Head of caudate nucleus (tissue), 42 donors: ENCODE measurements at regions of chr6 and their contacts with region 1.

Region 1: DNA sequence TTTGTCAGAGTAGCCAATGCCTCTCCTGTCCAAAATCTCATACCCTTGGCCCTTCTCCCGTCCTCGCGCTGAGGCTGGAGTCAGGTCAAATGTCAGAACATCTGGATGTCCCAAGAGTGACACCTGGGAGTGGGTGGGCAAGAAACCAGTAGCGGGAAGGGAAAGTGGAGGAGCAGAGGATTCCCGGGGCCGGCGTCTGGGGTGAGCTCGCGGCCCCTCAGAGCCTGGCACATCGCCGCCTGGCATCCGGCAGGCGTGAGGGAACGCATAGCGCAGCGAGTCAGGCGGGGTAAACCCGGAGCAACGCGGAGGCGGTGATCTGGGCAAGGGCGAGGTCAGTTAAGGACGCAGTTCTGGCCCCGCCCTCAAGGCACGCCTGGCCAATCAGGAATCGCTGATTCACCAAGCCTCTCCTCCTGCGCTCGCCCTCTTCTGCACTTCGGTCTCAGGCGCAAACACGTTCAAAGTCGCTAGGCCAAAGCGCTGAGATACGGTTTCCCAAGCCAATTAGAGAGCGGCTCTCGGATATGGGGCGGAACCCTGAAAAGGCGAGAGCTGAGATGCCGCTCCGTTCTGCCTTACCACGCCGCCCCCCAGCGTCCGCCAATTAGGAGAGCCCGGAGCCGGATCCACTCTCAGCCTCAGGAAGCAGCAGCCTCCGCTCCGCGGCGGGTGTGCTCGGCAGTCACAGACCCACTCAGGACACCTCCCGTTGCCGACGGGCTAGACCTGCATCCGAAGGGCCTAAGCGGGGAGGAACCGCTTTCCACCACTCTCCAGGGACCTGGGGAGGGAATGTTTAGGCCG is 22.5 kb downstream of the VPS52 start:
- DNase-seq: peak; percentile 90 to 99 (median 98)

Region 2: GRCh38 chr6:32445321-32445854 is 803.7 kb before region 1 on chr6:
- intact Hi-C with region 1: no loop called
- DNase-seq: no peak

Region 3: GRCh38 chr6:33014841-33015634 is 234.1 kb before region 1 on chr6:
- intact Hi-C with region 1: loop called (anchors 10 kb)
- DNase-seq: peak in 22 of 42 donors; percentile 5 to 84 (median 60)

Region 4: DNA sequence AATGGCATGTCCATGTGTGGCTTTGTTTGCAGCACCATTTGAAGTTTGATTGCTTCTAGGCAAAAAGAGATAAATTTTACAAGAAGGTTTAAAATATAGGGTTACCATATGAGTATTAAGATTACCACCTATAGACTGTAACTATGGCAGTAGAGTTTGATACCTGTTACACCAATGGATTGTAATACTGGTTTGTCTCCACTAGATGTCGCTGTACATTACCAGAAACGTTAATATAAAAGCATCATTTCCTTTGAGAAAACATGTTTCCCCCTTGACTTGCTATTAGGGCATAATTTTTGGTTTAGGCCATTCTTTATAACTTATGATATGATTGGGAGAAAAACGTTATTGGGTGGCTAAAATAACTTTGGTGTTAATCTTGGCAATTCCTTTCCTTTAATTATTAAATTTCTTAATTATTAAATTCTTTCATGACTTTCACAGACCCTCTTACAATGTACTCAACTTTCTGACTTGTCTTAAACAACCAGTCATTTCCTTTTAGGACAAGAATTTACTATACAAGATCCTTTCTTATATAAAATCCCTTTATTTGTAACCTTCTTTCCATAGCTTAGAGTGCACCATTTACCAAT is 130.5 kb before region 1 on chr6:
- intact Hi-C with region 1: loop called (anchors 5 kb)
- DNase-seq: peak in 4 of 42 donors; percentile 18 to 51 (median 26)

Region 5: DNA sequence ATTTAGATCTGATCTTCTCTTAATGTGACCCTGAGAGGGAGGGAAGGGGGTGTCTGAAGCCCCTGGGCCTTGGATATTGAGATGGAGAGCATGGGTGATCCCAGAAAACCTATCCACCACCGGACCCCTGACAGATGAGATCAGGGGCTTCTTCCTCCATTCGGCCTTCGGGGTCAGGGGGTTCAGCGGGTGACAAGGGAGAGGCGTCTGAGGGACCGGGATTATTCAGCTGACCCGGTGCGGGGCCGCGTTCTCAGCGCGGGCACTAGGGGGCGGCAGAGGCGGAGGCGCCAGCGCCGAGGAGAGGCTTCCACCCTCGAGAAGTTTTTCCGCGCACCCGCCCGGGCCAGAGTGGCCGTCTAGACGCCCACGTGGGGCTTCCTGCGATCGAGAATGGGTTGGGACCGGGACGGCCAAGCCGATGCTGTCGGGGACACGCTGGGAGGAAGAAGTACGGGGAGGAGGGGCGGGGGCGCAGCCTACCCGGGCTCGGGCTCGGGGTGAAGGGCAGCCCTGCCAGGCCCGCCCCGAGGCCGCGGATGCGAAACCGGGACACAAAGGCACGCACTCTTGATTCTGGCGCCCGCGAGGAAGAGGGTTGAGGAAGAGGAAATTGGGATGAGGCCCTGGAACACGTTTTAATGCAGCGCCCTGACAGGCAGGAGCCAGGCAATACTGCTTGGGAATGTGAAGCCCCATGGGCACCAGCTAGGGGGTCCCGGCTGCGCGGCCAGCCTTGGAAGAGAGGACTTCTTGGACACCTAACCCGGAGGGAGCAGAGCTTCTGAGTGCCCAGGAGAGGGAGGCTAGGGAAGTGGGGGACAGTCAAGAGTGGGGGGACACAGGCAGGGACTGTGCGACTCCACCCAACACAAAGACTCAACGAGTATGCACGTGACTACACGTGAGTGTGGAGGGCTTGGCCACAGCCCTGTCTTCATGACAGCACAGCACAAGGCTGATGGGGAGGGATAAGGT is 87.5 kb before region 1 on chr6:
- intact Hi-C with region 1: loop called (anchors 5 kb)
- DNase-seq: peak; percentile 50 to 93 (median 84)

Region 6: DNA sequence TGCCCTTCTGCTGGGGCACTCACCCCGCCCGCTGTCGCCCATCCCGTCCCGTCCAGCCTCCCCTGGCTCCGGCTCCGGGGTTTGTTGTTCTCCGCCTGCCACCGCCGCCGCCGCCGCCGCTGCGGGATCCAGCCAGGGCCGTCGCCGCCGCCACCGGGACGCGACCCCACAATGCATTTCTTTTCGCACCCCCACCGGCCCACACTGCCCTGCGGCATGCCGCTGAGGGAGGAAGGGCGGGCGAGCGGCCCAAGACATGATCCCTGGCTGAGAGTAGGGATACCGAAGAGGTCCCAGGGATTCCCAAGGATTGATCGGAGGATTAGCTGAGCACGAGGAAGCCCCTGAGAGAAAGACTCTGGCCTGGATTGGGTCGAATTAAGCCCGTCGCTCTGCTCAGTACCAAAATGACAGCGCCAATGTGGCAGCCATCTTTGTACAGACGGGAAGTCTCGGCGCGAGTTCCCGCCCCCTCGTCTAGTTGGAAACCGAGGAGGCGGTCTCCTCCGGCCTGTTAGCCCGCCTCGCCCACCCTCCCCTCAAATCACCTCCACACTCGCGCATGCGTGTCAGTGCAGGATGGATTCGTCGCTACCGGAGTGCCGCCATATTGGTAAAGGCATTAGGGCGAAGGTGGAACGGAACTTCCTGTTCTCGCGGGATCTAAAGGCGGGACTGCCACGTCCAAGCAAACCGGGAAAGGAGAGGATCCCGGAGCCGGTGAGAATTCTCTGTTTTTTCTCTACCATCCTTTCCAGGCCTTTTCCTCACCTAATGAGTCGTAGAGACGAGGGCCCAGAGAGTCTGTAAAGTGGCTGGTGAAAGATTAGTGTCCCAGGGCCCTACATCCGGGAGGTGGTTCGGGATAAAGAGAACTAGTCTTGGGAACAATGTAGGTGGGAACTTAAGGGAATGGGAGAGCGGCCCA is 48.6 kb before region 1 on chr6 and contains the starts of genes RXRB and SLC39A7:
- intact Hi-C with region 1: loop called (anchors 5 kb)
- DNase-seq: peak; percentile 95 to 99 (median 98)

Region 7: DNA sequence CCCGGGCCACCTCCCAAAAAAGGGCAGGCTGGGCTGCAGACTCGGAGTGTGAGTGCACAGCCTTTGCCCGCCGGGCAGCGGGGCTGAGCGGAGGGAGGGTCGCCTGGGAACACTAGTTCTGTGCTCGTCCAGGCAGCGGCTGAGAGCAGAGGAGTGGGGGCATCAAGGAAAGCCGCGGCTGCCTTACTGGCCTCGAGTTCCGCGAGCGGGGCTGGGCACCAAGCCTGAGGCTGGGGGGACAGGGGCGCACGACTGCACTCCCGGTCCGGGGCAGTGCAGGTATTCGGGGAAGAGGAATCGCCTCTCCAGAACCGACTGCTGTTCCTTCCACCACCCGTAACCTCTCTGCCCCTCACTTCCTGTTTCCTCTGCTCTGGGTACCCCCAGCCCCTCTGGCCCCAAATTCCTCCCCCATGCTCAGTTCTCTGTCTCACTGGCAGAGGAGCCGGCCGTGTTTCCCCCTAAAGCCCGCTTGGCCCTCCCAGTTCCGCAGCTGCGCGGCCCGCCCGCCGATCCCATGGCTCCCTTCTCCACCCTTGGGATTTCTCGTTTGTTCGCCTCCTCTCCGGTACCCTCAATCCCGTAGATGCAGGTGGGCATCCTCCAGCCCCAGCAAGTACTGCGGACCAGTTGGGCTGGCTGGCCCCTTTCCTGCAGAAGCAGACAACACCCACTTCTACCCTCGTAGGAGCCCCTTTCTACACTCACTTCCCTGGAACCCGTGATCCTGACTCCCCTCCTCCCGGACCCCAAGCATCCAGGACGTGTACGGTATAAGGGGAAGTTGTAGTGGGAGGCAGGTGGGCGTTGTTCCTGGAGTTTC is 35.8 kb before region 1 on chr6:
- intact Hi-C with region 1: loop called (anchors 2 kb)
- DNase-seq: peak in 38 of 42 donors; percentile 32 to 82 (median 61)